ENCODE measurements at regions of chr14 and their contacts with region 1.

Region 1: GRCh38 chr14:70472253-70473159 is 20.5 kb downstream of the ADAM21 start:
- DNase-seq: no peak

Region 2: DNA sequence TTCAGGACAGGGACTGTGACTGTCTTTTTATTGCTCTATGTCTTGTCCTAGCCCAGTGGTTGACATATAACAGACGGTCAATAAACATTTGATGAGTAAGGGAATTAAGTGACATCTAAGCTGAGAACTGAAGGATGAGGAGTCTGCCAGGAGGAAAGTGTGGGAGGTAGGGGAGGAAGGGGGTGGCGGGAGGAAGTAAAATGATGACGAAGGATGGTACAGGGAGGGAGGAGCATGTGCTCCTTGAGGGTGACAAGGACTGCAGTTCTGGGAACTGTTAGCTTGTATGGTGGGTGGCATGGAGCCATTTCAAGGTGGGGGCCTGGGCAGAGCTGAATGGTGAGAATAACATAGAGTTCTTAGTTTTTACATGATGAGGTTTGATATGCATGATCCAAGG is 1524.1 kb after region 1 on chr14:
- intact Hi-C with region 1: loop called in 1 of 2 experiments (anchors 10 kb)
- DNase-seq: no peak